IMR-90 (cell line): ENCODE measurements at regions of chr1 and their contacts with region 1.

Region 1: GRCh38 chr1:36420836-36421664 is 23.3 kb upstream of the LSM10 start:
- DNase-seq: peak; percentile 82
- ATAC-seq: peak; percentile 99
- H3K4me3 ChIP-seq: no peak overlapping the region
- H3K27ac ChIP-seq: no peak overlapping the region
- H3K4me1 ChIP-seq: peaks cover 5% of the 10 kb centered on the region
- H3K27me3 ChIP-seq: no peaks in the 10 kb centered on the region
- CTCF ChIP-seq: peak; percentile 94
- POLR2A ChIP-seq: peak; percentile 44; the same call in 1 of the 2 replicates
- RAD21 ChIP-seq: peak; percentile 99

Region 2: DNA sequence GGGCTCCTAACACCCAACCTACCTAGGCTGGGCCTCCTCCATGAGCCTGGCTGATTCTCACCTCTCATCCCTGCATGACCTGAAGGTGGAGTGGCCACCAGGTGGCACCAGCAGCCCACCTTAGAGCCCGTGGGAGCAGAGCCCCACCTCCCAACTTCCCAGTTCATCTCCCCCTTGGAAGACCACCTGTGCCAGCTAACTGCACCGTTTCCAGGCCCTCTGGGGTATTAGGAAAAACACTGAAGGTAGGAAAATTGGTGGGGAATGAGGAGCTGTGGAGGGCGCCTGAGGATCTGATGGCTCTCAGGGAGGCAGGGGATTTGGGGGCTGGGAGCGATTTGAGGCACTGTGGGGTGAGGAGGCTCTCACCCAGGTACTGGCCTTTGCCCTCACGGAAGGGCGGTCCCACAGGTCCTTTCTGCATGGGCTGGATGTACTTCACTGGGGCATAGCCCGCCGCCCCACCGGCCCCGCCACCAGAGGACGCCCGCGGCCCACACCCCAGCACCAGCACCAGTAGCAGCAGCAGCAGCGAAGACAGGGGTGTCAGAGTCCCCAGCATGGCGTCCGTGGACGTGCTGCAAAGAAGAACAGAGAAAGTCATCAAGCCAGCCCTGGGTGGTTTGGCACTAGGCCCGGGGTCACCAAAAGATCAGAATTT is 321.2 kb before region 1 on chr1:
- CTCF ChIA-PET with region 1: no interaction called
- POLR2A ChIA-PET with region 1: no interaction called
- dilution Hi-C with region 1: no loop called
- in situ Hi-C with region 1: loop called (anchors 25 kb)
- intact Hi-C with region 1: loop called (anchors 1 kb)
- DNase-seq: peak; percentile 73
- ATAC-seq: peak; percentile 94
- H3K4me3 ChIP-seq: no peak overlapping the region
- H3K27ac ChIP-seq: no peak overlapping the region
- H3K4me1 ChIP-seq: no peaks in the 10 kb centered on the region
- H3K27me3 ChIP-seq: no peaks in the 10 kb centered on the region
- CTCF ChIP-seq: peak; percentile 92
- POLR2A ChIP-seq: no peak
- RAD21 ChIP-seq: peak; percentile 98

Region 3: GRCh38 chr1:36306902-36307456 is 114.1 kb before region 1 on chr1:
- CTCF ChIA-PET with region 1: no interaction called
- POLR2A ChIA-PET with region 1: no interaction called
- dilution Hi-C with region 1: no loop called
- in situ Hi-C with region 1: no loop called
- intact Hi-C with region 1: loop called (anchors 2 kb)
- DNase-seq: peak; percentile 91
- ATAC-seq: peak; percentile 99
- H3K4me3 ChIP-seq: peak overlapping the region; percentile 61
- H3K27ac ChIP-seq: peak overlapping the region; percentile 47
- H3K4me1 ChIP-seq: peaks cover 8% of the 10 kb centered on the region
- H3K27me3 ChIP-seq: no peaks in the 10 kb centered on the region
- CTCF ChIP-seq: no peak
- POLR2A ChIP-seq: peak; percentile 96
- RAD21 ChIP-seq: no peak

Region 4: DNA sequence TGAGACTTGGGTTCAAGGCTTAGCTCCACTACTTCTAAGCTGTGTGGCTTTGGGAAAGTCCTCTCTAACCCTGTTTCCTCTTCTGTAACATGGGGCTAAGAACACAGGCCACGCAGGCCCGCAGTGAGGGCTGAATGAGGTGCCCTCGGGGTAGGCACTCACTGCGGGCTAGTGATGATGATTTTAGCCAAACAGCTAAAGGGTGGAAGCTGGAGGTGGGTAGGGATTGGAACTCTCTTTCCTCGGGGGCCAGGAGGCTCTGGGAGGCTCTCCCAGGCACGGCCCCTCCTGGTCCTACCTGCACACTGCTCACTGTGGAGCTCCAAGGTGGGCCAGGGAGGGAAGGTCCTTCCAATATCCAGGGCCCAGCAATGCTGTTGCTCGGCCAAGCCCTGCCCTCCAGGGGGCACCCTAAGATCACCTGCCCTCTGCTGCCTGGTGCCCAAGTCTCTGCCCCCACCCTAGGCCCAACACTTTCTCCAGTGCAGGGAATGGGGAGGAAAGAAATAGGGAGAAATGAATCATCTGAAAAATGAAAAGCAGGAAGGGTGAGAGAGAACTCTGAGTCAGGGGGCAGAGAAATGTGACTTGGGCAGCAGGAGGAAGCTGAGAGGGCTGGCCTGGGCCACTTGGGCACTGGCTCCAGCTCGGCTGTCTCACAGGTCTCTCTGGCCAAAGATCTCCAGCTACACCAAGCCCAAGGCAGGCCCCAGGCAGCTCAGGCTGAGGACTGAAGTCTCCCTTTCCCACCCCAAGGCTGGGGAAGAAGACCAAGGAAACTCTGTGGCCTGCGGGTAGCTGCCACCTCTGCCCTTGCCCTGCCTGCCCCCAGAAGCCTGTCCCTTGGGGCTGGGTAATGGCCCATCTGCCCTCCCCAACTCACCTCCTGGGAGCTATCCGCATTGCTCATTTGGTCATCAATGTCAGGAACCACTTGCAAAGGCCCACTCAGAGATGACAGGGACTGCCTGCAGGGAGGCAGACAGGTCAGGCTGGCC is 78.3 kb before region 1 on chr1:
- CTCF ChIA-PET with region 1: interaction called, 5 read pairs
- POLR2A ChIA-PET with region 1: no interaction called
- dilution Hi-C with region 1: no loop called
- in situ Hi-C with region 1: loop called (anchors 5 kb)
- intact Hi-C with region 1: loop called (anchors 1 kb)
- DNase-seq: peak; percentile 67
- ATAC-seq: peak; percentile 77
- H3K4me3 ChIP-seq: no peak overlapping the region
- H3K27ac ChIP-seq: peak overlapping the region; percentile 40
- H3K4me1 ChIP-seq: peaks cover 12% of the 10 kb centered on the region
- H3K27me3 ChIP-seq: no peaks in the 10 kb centered on the region
- CTCF ChIP-seq: peak; percentile 80
- POLR2A ChIP-seq: no peak
- RAD21 ChIP-seq: peak; percentile 88

Region 5: GRCh38 chr1:36385410-36386257 is 35.4 kb before region 1 on chr1 and contains the start of gene STK40:
- CTCF ChIA-PET with region 1: interaction called, 4 read pairs
- POLR2A ChIA-PET with region 1: interaction called, 3 read pairs
- dilution Hi-C with region 1: no loop called
- in situ Hi-C with region 1: no loop called
- intact Hi-C with region 1: loop called (anchors 5 kb)
- DNase-seq: peak; percentile 100
- ATAC-seq: peak; percentile 87
- H3K4me3 ChIP-seq: peak within 1 kb of the TSS; percentile 96
- H3K27ac ChIP-seq: peak within 1 kb of the TSS; percentile 94
- H3K4me1 ChIP-seq: peaks cover 20% of the 10 kb centered on the region
- H3K27me3 ChIP-seq: no peaks in the 10 kb centered on the region
- CTCF ChIP-seq: no peak
- POLR2A ChIP-seq: no peak; the same call in none of the 2 replicates
- RAD21 ChIP-seq: no peak
- total RNA-seq, gene STK40: 13.9 and 16.0 TPM in 2 replicates